Right cardiac atrium (tissue), 5 donors: ENCODE measurements at regions of chr10 and their contacts with region 1.

Region 1: GRCh38 chr10:122435212-122435827 is 19.1 kb upstream of the ARMS2 start:
- DNase-seq: no peak
- ATAC-seq: no peak
- H3K4me3 ChIP-seq: no peak overlapping the region
- H3K27ac ChIP-seq: no peak overlapping the region
- H3K4me1 ChIP-seq: no peaks in the 10 kb centered on the region
- H3K27me3 ChIP-seq: no peaks in the 10 kb centered on the region

Region 2: DNA sequence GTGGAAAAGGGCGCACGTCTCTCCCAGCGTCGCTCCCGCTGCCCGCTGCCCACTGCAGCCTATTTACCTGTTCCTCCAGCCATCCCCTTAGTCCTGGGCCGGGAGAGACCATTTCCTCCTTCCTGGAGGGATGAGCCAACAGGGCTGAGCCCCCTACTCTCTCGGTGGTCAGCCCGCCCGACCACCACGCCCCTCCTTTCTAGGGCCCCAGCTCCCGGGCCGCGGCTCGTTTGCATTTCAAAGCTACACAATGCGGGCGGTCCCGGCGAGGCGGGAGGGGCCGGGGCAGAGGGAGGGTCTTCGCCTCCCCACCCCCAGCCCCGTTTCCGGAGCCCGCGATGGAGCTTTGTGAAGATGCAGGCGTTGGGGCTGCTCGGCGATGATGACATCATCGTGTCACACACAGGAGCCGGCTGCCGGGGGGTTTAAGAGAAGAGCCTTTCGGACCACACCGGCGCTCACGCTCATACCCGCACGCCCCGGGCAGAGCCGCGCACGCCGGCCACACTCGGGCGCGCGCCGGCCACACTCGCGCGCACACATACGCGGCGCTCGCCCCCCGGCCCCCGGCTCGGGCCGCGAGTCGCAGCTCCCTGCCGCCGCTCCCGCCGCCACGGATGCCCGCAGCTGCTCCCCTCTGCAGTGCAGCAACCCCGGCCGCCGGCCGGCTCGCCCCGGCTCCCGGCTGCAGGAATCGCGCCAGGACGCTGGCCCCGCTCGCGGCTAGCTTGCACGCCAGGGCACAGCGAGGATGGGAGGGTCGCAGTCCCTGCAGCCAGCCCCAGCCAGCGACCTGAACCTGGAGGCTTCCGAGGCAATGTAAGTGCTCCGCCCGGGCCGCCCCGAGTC is 271.9 kb before region 1 on chr10:
- intact Hi-C with region 1: no loop called
- DNase-seq: peak in 2 of 3 donors; percentile 62 to 69
- ATAC-seq: peak; percentile 8 to 9
- H3K4me3 ChIP-seq: peak overlapping the region; percentile 57
- H3K27ac ChIP-seq: peak overlapping the region; percentile 23
- H3K4me1 ChIP-seq: peaks cover 21% of the 10 kb centered on the region
- H3K27me3 ChIP-seq: no peaks in the 10 kb centered on the region

Region 3: GRCh38 chr10:122298598-122299301 is 136.6 kb before region 1 on chr10:
- intact Hi-C with region 1: loop called (anchors 2 to 10 kb)
- DNase-seq: peak; percentile 66 to 90 (median 87)
- ATAC-seq: peak; percentile 82 to 86
- H3K4me3 ChIP-seq: no peak overlapping the region
- H3K27ac ChIP-seq: no peak overlapping the region
- H3K4me1 ChIP-seq: no peaks in the 10 kb centered on the region
- H3K27me3 ChIP-seq: no peaks in the 10 kb centered on the region

Region 4: DNA sequence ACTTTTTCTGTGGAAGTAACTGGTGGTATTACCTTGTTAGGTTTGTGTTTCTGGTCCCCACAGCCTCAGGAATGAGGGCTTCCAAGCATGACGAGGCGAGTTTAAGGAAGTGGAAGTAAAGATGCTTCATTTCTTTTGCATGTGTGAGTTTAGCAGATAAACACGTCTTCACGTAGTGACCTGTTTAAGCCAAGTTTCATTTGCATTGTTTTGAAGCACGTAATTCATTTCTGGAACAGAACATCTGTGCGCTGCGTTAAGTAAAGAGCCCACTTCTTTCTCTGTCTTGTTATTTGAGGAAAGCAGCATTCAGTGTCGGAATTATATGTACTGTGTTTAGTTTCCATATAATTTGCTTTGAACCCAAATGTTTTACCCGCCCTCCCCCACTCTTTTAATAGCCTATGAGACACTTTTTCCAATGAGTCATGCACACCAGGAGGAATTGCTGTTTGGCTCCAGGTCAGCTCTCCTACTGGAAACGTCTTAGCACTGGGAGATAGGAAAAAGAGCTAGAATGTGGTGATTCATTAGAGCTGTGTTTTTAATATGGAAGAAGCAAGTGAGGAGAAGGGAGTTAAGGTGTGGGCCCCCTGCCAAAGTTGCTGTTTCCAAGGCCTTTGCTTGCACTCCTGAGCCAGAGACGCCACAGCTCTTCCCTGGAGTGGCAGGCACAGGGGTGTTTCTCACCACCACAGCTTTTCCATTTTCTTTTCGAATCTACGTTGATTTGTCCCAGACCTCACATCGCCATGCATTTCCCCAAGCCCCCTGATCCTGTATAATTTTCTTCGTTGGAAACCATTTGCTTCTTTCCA is 127.4 kb before region 1 on chr10:
- intact Hi-C with region 1: loop called in 1 of 4 experiments (anchors 10 kb)
- DNase-seq: peak; percentile 80 to 89 (median 85)
- ATAC-seq: peak; percentile 81 to 93
- H3K4me3 ChIP-seq: no peak overlapping the region
- H3K27ac ChIP-seq: peak overlapping the region; percentile 76
- H3K4me1 ChIP-seq: peaks cover 9% of the 10 kb centered on the region
- H3K27me3 ChIP-seq: no peaks in the 10 kb centered on the region

Region 5: GRCh38 chr10:122342293-122343134 is 92.8 kb before region 1 on chr10:
- intact Hi-C with region 1: loop called (anchors 2 to 10 kb)
- DNase-seq: no peak
- ATAC-seq: peak in 1 of 2 donors; percentile 43
- H3K4me3 ChIP-seq: no peak overlapping the region
- H3K27ac ChIP-seq: no peak overlapping the region
- H3K4me1 ChIP-seq: no peaks in the 10 kb centered on the region
- H3K27me3 ChIP-seq: no peaks in the 10 kb centered on the region

Region 6: DNA sequence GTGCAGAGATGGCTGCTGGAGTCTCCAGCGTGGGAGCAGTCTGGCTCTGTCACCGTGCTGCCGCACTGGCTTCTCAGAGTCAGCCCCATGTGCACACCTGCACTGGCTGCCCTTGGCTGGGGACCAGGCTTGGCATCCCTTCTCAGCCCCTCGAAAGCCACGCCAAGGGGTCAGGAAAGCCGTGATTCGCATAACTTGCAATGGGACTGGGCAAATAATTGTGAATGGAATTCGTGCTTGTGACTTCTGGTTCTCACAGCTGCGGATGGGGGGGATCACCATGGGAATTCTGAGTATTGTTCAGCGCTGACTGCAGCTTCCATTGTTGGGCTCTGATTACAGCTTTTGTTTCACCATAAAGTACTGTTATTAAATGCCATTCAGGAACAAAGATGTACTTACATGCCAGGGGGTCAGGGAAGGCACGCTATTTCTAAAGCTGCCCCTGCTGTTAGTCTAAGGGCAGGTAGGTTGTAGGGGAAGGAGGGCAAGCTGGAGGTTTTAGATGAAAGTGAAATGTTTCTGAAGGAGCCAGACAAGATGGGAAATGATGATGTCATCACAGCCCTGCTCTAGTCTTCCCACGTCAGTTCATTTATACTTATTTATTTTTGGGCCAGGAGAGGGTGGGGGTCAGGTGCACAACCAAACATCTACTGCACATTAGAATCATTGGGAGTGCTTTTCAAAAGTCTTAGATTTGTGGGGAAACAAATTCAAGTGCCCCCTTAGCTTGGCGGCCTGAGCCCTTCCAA is 66.6 kb before region 1 on chr10:
- intact Hi-C with region 1: no loop called
- DNase-seq: peak in 1 of 3 donors; percentile 34
- ATAC-seq: no peak
- H3K4me3 ChIP-seq: no peak overlapping the region
- H3K27ac ChIP-seq: peak overlapping the region; percentile 12
- H3K4me1 ChIP-seq: peaks cover 5% of the 10 kb centered on the region
- H3K27me3 ChIP-seq: no peaks in the 10 kb centered on the region